ENCODE measurements at regions of chr14 and their contacts with region 1.

Region 1: DNA sequence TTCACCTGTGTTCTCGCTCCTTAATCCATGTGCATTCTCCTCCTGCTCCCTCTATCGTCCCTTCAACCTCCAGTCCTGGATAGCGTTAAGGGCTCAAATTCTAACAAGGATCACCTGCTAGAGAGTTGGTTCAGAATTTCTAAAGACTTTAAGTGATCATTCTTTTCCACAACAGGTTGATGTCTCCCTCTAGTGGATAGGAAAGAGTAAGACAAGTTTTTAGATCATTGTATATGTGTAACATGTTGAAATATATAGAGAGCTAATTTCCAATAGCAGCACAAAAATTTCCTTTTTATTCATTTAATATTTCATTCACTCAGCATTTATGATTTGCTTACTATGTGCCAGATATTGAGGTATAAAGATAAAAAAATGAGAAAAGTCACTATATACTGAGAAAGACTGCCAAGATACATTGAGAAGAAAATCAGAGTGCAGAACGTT is 9.3 kb upstream of the ESR2 start:
- DNase-seq: peak in 4 of 5 donors; percentile 44 to 58 (median 50)
- H3K4me3 ChIP-seq: no peak overlapping the region
- H3K4me3 Mint-ChIP-seq: no peak overlapping the region
- H3K27ac ChIP-seq: no peak overlapping the region
- H3K27ac Mint-ChIP-seq: no peak overlapping the region
- H3K4me1 ChIP-seq: no peaks in the 10 kb centered on the region
- H3K4me1 Mint-ChIP-seq: peaks cover 0 to 4% (median 2%) of the 10 kb centered on the region in 4 donors
- H3K27me3 ChIP-seq: peaks cover 2% of the 10 kb centered on the region
- H3K27me3 Mint-ChIP-seq: peaks cover 0 to 3% of the 10 kb centered on the region in 2 donors

Region 2: GRCh38 chr14:63603749-63604277 is 699.7 kb before region 1 on chr14:
- CTCF ChIA-PET with region 1: no interaction called
- POLR2A ChIA-PET with region 1: no interaction called
- intact Hi-C with region 1: no loop called
- DNase-seq: no peak
- H3K4me3 ChIP-seq: no peak overlapping the region
- H3K4me3 Mint-ChIP-seq: no peak overlapping the region
- H3K27ac ChIP-seq: no peak overlapping the region
- H3K27ac Mint-ChIP-seq: no peak overlapping the region
- H3K4me1 ChIP-seq: no peaks in the 10 kb centered on the region
- H3K4me1 Mint-ChIP-seq: peaks cover 8 to 11% (median 8%) of the 10 kb centered on the region in 4 donors
- H3K27me3 ChIP-seq: no peaks in the 10 kb centered on the region
- H3K27me3 Mint-ChIP-seq: no peaks in the 10 kb centered on the region

Region 3: DNA sequence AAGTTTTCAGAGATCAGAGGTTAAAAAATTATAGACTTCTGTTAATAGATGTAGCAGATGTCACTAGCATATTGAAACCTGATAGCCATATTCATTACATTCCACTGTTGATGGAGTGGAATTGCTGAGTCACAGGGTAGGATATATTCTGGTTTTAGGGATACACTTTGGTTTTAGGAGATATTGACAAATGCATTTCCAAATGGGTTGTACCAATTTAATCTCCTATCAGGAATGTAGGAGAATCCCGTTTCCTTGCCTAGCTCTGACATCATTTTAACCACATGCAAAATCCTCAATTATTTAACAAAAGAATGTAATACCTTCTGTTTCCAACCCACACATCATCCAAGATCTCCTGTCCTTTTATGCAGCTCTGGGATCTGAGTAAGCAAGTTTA is 21.4 kb after region 1 on chr14:
- CTCF ChIA-PET with region 1: interaction called, 10 read pairs
- POLR2A ChIA-PET with region 1: no interaction called
- intact Hi-C with region 1: no loop called
- DNase-seq: no peak
- H3K4me3 ChIP-seq: no peak overlapping the region
- H3K4me3 Mint-ChIP-seq: no peak overlapping the region
- H3K27ac ChIP-seq: no peak overlapping the region
- H3K27ac Mint-ChIP-seq: peak overlapping the region in 1 of 7 donors; percentile 5
- H3K4me1 ChIP-seq: no peaks in the 10 kb centered on the region
- H3K4me1 Mint-ChIP-seq: peaks cover 0 to 2% (median 0%) of the 10 kb centered on the region in 4 donors
- H3K27me3 ChIP-seq: no peaks in the 10 kb centered on the region
- H3K27me3 Mint-ChIP-seq: peaks cover 11 to 15% of the 10 kb centered on the region in 2 donors

Region 4: DNA sequence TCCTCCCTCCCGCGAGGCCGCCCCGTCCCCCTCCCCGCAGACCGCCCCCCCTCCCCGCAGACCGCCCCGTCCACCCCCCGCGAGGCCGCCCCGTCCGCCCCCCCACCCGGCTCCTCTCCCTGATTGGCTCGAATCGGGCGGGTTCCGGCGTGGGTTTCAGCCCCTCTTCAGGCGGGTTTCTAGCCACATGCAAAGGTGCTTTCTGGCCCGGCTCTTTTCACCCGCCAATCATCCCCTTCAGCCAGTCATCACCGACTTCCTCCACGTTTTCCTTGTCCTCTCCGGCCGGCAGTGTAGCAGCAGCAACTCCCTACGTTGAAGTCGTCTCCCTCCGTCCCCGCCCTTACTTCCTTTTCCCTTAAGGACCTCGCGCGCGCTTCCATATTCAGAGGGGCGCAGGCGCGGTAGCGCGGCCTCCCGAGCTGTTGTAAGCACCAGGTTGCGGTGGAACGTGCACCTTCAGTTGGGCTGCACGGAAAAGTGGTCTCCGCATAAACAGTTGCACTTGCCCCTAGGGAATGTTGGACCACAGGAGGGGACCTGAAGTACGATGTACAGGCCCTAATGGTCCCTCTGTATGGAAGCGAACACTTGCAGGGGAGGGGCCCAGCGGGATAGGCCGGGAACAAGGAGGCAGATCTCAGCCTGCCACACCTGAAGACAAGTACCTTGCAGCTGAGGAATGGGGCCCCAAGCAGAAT is 35.3 kb after region 1 on chr14:
- CTCF ChIA-PET with region 1: interaction called, 11 read pairs
- POLR2A ChIA-PET with region 1: no interaction called
- intact Hi-C with region 1: no loop called
- DNase-seq: peak; percentile 84 to 91 (median 85)
- H3K4me3 ChIP-seq: peak overlapping the region; percentile 36 to 77
- H3K4me3 Mint-ChIP-seq: peak overlapping the region; percentile 93 to 99 (median 95)
- H3K27ac ChIP-seq: peak overlapping the region; percentile 34
- H3K27ac Mint-ChIP-seq: peak overlapping the region; percentile 83 to 97 (median 95)
- H3K4me1 ChIP-seq: peaks cover 17% of the 10 kb centered on the region
- H3K4me1 Mint-ChIP-seq: peaks cover 12 to 27% (median 21%) of the 10 kb centered on the region in 4 donors
- H3K27me3 ChIP-seq: no peaks in the 10 kb centered on the region
- H3K27me3 Mint-ChIP-seq: no peaks in the 10 kb centered on the region

Measured in CD4-positive, alpha-beta memory T cell (primary cell).